Activated naive CD4-positive, alpha-beta T cell treated with anti-CD3 and anti-CD28 coated beads for 36 hours (primary cell): ENCODE measurements at regions of chr5 and their contacts with region 1.

Region 1: GRCh38 chr5:143968011-143968878 is 156.3 kb downstream of the HMHB1 start:
- DNase-seq: peak; percentile 6
- H3K4me3 Mint-ChIP-seq: no peak overlapping the region
- H3K27ac Mint-ChIP-seq: no peak overlapping the region
- H3K4me1 Mint-ChIP-seq: no peaks in the 10 kb centered on the region
- H3K27me3 Mint-ChIP-seq: peaks cover 16% of the 10 kb centered on the region

Region 2: GRCh38 chr5:142922223-142922952 is 1045.9 kb before region 1 on chr5:
- CTCF ChIA-PET with region 1: interaction called, 4 read pairs
- intact Hi-C with region 1: loop called (anchors 5 kb)
- DNase-seq: no peak
- H3K4me3 Mint-ChIP-seq: no peak overlapping the region
- H3K27ac Mint-ChIP-seq: no peak overlapping the region
- H3K4me1 Mint-ChIP-seq: peaks cover 13% of the 10 kb centered on the region
- H3K27me3 Mint-ChIP-seq: no peaks in the 10 kb centered on the region

Region 3: DNA sequence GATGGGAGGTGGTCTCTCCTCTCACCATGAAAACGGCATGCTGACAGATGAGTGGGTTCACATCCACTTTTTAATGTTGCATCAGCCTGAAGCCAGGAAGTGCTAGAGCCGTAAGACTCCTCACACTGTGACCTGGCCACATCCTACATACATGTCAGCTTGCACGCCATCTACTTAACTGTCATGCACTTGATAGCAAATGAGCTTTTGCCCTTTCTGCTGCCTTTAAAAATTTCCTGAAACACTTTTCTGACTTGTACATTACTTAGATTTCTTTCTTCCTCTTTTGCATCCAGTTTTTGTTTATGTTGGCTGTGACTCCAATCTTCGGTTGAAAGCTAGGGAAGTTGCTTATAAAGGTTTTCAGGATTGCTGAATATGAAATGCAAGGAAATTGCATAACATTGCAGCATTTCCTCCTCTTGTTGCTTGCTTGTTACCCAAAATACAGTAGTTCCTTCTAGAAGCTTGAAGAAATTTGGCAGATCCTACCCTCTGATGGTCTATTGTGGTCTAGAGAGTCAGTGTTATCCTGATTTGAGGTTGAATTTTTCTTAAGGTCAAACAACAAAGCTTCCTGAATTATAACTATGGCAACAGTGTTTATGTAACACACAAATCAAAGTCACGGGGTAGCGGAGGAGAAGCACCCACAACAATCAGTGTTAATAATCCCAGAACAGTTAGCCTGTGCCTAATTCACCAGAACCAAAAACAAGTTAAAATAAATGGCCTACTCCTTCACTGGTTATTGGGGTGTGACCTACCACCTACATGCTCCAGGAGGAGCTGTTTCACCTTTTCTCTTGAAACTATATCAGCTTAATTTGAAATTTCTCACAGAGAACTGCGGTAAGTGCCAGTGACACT is 965.6 kb before region 1 on chr5:
- CTCF ChIA-PET with region 1: interaction called, 4 read pairs
- intact Hi-C with region 1: loop called (anchors 2 kb)
- DNase-seq: peak; percentile 82
- H3K4me3 Mint-ChIP-seq: peak overlapping the region; percentile 2
- H3K27ac Mint-ChIP-seq: peak overlapping the region; percentile 92
- H3K4me1 Mint-ChIP-seq: peaks cover 53% of the 10 kb centered on the region
- H3K27me3 Mint-ChIP-seq: no peaks in the 10 kb centered on the region

Region 4: GRCh38 chr5:143957455-143957854 is 10.8 kb before region 1 on chr5:
- CTCF ChIA-PET with region 1: interaction called, 10 read pairs
- intact Hi-C with region 1: no loop called
- DNase-seq: no peak
- H3K4me3 Mint-ChIP-seq: no peak overlapping the region
- H3K27ac Mint-ChIP-seq: no peak overlapping the region
- H3K4me1 Mint-ChIP-seq: no peaks in the 10 kb centered on the region
- H3K27me3 Mint-ChIP-seq: peaks cover 3% of the 10 kb centered on the region

Region 5: GRCh38 chr5:143979044-143979690 is 10.9 kb after region 1 on chr5:
- CTCF ChIA-PET with region 1: interaction called, 11 read pairs
- intact Hi-C with region 1: no loop called
- DNase-seq: peak; percentile 8
- H3K4me3 Mint-ChIP-seq: no peak overlapping the region
- H3K27ac Mint-ChIP-seq: peak overlapping the region; percentile 38
- H3K4me1 Mint-ChIP-seq: peaks cover 3% of the 10 kb centered on the region
- H3K27me3 Mint-ChIP-seq: peaks cover 3% of the 10 kb centered on the region

Region 6: DNA sequence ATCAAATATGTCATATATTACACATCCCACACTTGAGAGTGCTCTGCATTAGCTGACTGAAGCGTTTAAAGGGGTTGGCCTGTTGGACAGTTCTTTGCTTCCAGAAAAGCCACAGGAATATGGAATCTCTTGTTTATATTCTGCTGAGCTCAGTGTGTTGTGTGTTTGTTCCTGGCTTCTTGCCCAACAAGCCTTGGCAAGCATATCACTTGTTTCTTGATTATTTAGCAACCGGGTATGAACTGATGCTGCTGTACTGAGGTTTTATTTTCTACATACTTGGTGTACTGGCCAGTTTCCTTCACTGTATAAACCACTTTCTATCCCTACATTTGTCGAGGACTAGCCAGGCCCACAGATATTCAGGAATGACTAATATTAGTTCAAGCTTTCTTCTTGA is 581.3 kb after region 1 on chr5:
- CTCF ChIA-PET with region 1: no interaction called
- intact Hi-C with region 1: no loop called
- DNase-seq: no peak
- H3K4me3 Mint-ChIP-seq: no peak overlapping the region
- H3K27ac Mint-ChIP-seq: no peak overlapping the region
- H3K4me1 Mint-ChIP-seq: no peaks in the 10 kb centered on the region
- H3K27me3 Mint-ChIP-seq: no peaks in the 10 kb centered on the region